Tibial artery (tissue), 4 donors: ENCODE measurements at regions of chr14 and their contacts with region 1.

Region 1: DNA sequence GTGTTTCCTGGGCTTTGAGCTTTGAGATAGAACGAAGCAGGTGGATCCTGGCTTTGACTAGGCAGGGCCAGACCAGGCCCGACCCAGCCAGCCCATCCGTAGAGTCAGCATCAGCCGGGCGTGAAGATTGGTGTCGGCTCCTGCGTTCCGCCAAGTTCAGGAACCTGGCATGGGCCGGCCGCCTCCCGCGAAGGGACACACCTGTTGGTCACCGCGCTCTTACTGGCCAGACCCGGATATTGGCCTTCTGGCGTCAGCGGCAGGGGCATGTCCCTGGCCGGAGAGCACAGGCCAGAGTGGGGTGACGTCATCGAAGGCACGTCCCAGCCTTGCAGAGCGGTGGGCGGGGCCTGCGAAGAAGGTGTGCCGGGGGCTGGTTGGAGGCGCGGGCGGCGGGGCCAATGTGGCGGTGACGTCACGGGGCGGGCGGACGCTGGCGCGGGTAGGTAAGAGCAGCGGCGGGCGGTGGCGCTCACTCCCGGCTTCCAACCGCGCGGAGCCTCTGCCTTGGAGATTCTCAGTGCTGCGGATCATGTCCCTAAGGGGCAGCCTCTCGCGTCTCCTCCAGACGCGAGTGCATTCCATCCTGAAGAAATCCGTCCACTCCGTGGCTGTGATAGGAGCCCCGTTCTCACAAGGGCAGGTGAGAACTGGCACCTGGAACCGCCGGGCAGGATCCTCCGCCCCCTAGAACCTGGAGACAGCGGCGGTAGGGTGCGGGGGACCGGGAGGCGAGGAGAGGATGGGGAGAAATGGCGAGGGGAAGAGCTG is at the start of gene ARG2:
- DNase-seq: peak; percentile 98 to 99
- H3K4me3 ChIP-seq: peak within 1 kb of the TSS; percentile 58 to 70
- H3K27ac ChIP-seq: peak within 1 kb of the TSS; percentile 83 to 85
- H3K4me1 ChIP-seq: peaks cover 0 to 29% (median 15%) of the 10 kb centered on the region in 4 donors
- H3K27me3 ChIP-seq: no peaks in the 10 kb centered on the region
- CTCF ChIP-seq: no peak

Region 2: DNA sequence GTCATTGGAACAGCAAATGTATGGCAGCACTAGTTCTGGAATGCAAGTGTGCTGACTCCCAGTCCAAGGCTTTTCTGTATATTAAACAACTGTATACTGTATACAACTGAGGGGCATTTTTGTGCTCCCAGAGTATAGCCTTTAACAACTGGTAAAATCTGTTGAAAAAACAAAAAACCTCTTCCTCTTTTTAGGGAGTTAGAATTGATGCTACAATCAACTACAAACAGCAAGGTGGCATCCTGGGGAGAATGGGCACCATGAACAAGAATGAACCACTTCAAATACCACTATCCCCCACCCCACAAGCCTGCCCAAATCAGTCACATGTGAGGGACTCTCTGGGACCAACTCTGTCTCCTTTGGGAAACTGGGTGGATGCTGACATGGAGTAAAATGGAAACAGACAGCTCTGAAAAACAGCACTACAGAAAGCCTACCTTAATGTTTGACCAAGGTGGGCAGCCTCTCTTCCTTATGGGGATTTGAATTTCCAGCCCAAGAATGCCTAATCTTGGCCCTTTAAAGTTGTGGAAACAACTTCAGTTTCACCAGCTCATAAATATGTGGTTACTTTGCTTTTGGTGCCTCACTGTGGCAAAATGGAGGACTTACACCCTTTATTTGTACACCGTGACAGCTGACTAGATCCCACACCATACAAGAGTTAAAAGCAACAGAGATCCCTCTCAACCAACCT is 47.3 kb after region 1 on chr14:
- intact Hi-C with region 1: loop called (anchors 5 kb)
- DNase-seq: no peak
- H3K4me3 ChIP-seq: no peak overlapping the region
- H3K27ac ChIP-seq: no peak overlapping the region
- H3K4me1 ChIP-seq: peaks cover 0 to 16% (median 3%) of the 10 kb centered on the region in 4 donors
- H3K27me3 ChIP-seq: no peaks in the 10 kb centered on the region
- CTCF ChIP-seq: peak; percentile 49 to 74

Region 3: GRCh38 chr14:67704484-67705089 is 85.0 kb after region 1 on chr14:
- intact Hi-C with region 1: loop called (anchors 10 kb)
- DNase-seq: no peak
- H3K4me3 ChIP-seq: no peak overlapping the region
- H3K27ac ChIP-seq: no peak overlapping the region
- H3K4me1 ChIP-seq: no peaks in the 10 kb centered on the region
- H3K27me3 ChIP-seq: no peaks in the 10 kb centered on the region
- CTCF ChIP-seq: peak; percentile 71 to 74

Region 4: DNA sequence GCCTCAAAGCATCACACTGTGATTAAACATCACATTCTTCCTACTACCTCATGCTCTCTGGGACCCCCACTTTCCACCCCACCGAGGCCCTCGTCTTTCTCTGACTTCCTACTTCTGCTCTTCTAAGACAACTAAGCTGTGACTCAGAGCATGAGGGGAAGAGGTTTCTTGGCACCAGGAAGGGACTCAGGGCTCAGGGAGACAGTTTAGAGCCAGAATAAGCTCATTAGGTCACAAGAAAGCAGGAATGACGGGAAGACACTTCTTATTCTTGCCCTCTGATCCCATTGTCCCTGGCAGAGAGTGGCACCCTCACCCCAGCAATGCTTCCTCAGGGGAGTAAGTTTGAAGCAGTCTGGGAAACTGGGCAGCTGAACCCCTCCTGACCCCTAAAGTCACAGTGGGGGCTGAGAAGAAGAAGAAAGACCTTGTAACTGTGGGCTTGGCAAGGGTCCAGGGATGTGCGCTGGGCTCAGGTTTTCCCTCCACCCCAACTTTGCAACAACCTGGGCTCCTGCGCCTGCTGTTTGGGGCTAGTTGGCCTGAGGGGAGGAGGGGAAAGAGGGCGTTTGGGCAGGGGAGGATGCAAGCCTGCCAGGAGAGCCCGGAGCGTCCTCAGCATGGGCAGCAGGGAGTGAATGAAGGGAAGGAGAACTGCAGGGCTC is 1424.1 kb after region 1 on chr14:
- intact Hi-C with region 1: no loop called
- DNase-seq: peak; percentile 61 to 81
- H3K4me3 ChIP-seq: no peak overlapping the region
- H3K27ac ChIP-seq: peak overlapping the region; percentile 87 to 91
- H3K4me1 ChIP-seq: peaks cover 0 to 99% (median 72%) of the 10 kb centered on the region in 4 donors
- H3K27me3 ChIP-seq: no peaks in the 10 kb centered on the region
- CTCF ChIP-seq: no peak